Heart left ventricle (tissue), 16 donors: ENCODE measurements at regions of chr6 and their contacts with region 1.

Region 1: DNA sequence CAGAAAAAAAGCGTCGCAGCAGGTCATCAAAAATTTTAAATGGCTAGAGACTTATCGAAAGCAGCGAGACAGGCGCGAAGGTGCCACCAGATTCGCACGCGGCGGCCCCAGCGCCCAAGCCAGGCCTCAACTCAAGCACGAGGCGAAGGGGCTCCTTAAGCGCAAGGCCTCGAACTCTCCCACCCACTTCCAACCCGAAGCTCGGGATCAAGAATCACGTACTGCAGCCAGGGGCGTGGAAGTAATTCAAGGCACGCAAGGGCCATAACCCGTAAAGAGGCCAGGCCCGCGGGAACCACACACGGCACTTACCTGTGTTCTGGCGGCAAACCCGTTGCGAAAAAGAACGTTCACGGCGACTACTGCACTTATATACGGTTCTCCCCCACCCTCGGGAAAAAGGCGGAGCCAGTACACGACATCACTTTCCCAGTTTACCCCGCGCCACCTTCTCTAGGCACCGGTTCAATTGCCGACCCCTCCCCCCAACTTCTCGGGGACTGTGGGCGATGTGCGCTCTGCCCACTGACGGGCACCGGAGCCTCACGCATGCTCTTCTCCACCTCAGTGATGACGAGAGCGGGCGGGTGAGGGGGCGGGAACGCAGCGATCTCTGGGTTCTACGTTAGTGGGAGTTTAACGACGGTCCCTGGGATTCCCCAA is at the start of gene EEF1A1:
- DNase-seq: peak; percentile 97 to 99 (median 98)
- ATAC-seq: peak; percentile 89 to 94 (median 93)
- H3K4me3 ChIP-seq: peak within 1 kb of the TSS; percentile 54 to 99 (median 80)
- H3K27ac ChIP-seq: peak within 1 kb of the TSS; percentile 91 to 100 (median 98)
- H3K4me1 ChIP-seq: peaks cover 0 to 57% (median 39%) of the 10 kb centered on the region in 12 donors
- H3K27me3 ChIP-seq: peaks cover 0 to 31% (median 0%) of the 10 kb centered on the region in 9 donors
- CTCF ChIP-seq: no peak
- POLR2A ChIP-seq: peak; percentile 84 to 98
- total RNA-seq, gene EEF1A1: 975 to 3,337 (median 1,528) TPM

Region 2: GRCh38 chr6:73566954-73567591 is 46.3 kb after region 1 on chr6:
- intact Hi-C with region 1: loop called in 3 of 10 experiments (anchors 5 kb)
- DNase-seq: peak in 4 of 5 donors; percentile 62 to 81 (median 72)
- ATAC-seq: peak; percentile 27 to 78 (median 60)
- H3K4me3 ChIP-seq: no peak overlapping the region
- H3K27ac ChIP-seq: peak overlapping the region; percentile 16 to 86 (median 64)
- H3K4me1 ChIP-seq: peaks cover 0 to 17% (median 4%) of the 10 kb centered on the region in 12 donors
- H3K27me3 ChIP-seq: no peaks in the 10 kb centered on the region
- CTCF ChIP-seq: no peak
- POLR2A ChIP-seq: peak in 1 of 2 donors; percentile 33

Region 3: GRCh38 chr6:73580247-73581149 is 59.7 kb after region 1 on chr6:
- intact Hi-C with region 1: loop called in 7 of 10 experiments (anchors 1 to 10 kb)
- DNase-seq: peak; percentile 75 to 88 (median 78)
- ATAC-seq: peak; percentile 80 to 97 (median 95)
- H3K4me3 ChIP-seq: peak overlapping the region in 9 of 12 donors; percentile 18 to 48 (median 35)
- H3K27ac ChIP-seq: peak overlapping the region; percentile 75 to 96 (median 92)
- H3K4me1 ChIP-seq: peaks cover 7 to 51% (median 19%) of the 10 kb centered on the region in 12 donors
- H3K27me3 ChIP-seq: no peaks in the 10 kb centered on the region
- CTCF ChIP-seq: peak in 10 of 12 donors; percentile 12 to 56 (median 39)
- POLR2A ChIP-seq: peak in 1 of 2 donors; percentile 69

Region 4: DNA sequence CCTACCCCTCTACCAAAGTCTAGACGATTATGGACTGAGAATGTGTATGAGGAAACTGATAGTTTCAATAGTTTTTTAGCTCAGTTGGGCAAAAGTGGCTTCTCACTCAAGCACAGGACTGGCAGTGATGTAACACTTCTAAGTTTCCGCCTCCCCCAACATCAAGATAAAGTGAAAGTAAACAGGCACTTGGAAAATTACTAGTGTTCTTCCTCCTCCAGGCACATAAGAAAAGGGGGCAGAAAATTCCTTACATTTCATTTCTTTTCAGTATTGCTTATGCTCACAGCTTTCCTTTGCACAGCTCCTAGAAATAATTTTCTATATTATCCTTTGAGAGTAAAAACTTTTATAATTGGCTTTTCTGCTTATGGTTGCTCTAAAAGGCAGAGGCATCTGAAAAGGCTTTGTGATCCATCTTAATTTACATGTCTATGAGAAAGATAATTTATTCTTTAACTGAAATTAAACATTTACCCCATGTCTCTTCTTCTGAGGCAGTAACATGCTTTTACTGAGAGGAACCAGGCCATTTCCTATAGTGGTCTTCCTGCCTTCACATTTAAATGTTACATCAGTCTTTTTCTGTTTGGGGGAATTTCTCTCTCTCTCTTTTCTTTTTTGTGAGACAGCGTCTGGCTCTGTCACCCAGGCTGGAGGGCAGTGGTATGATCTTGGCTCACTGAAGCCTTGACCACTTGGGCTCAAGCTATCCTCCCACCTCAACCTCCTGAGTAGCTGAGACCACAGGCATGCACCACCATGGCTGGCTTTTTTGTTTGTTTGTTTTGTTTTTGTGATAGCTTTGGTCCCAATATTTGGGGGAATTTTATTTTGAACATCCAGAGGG is 65.0 kb after region 1 on chr6:
- intact Hi-C with region 1: loop called in 8 of 10 experiments (anchors 1 to 10 kb)
- DNase-seq: peak in 2 of 5 donors; percentile 32 to 50
- ATAC-seq: peak; percentile 49 to 84 (median 70)
- H3K4me3 ChIP-seq: peak overlapping the region in 9 of 12 donors; percentile 0 to 43 (median 27)
- H3K27ac ChIP-seq: peak overlapping the region; percentile 55 to 96 (median 83)
- H3K4me1 ChIP-seq: peaks cover 0 to 35% (median 15%) of the 10 kb centered on the region in 12 donors
- H3K27me3 ChIP-seq: no peaks in the 10 kb centered on the region
- CTCF ChIP-seq: no peak
- POLR2A ChIP-seq: peak in 1 of 2 donors; percentile 25

Region 5: GRCh38 chr6:73732845-73733675 is 212.2 kb after region 1 on chr6:
- intact Hi-C with region 1: loop called in 2 of 10 experiments (anchors 5 to 10 kb)
- DNase-seq: peak; percentile 56 to 73 (median 68)
- ATAC-seq: peak; percentile 62 to 94 (median 91)
- H3K4me3 ChIP-seq: no peak overlapping the region
- H3K27ac ChIP-seq: no peak overlapping the region
- H3K4me1 ChIP-seq: peaks cover 0 to 2% (median 0%) of the 10 kb centered on the region in 12 donors
- H3K27me3 ChIP-seq: no peaks in the 10 kb centered on the region
- CTCF ChIP-seq: peak; percentile 84 to 95 (median 90)
- POLR2A ChIP-seq: no peak

Region 6: DNA sequence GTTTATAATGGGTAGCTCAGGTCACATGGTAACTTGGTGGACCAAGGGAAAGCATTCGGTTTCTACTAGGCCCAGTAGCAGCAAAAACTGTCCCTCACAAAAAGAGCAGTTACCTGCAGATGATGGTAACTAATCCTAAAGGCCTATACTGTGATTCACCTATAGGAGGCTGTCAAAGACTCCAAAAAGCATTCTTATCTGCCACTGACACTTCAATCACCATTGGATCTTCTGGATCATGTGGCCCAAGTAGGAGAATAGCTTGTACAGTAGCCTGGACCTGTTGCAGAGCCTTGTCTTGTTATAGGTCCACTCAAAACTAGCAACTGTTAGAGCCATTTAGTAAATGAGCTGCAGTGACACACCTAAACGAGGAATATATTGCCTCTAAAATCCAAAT is 1995.9 kb after region 1 on chr6:
- intact Hi-C with region 1: loop called in 1 of 10 experiments (anchors 10 kb)
- DNase-seq: no peak
- ATAC-seq: no peak
- H3K4me3 ChIP-seq: no peak overlapping the region
- H3K27ac ChIP-seq: no peak overlapping the region
- H3K4me1 ChIP-seq: no peaks in the 10 kb centered on the region
- H3K27me3 ChIP-seq: no peaks in the 10 kb centered on the region
- CTCF ChIP-seq: no peak
- POLR2A ChIP-seq: no peak